HepG2 (cell line): ENCODE measurements at regions of chr9 and their contacts with region 1.

Region 1: GRCh38 chr9:125544988-125545651 is 161.9 kb downstream of the MAPKAP1 start:
- DNase-seq: no peak
- ATAC-seq: no peak
- H3K4me3 ChIP-seq: no peak overlapping the region
- H3K27ac ChIP-seq: no peak overlapping the region
- H3K4me1 ChIP-seq: peaks cover 37% of the 10 kb centered on the region
- H3K27me3 ChIP-seq: no peaks in the 10 kb centered on the region
- CTCF ChIP-seq: no peak
- EP300 ChIP-seq: no peak
- POLR2A ChIP-seq: no peak
- RAD21 ChIP-seq: no peak

Region 2: DNA sequence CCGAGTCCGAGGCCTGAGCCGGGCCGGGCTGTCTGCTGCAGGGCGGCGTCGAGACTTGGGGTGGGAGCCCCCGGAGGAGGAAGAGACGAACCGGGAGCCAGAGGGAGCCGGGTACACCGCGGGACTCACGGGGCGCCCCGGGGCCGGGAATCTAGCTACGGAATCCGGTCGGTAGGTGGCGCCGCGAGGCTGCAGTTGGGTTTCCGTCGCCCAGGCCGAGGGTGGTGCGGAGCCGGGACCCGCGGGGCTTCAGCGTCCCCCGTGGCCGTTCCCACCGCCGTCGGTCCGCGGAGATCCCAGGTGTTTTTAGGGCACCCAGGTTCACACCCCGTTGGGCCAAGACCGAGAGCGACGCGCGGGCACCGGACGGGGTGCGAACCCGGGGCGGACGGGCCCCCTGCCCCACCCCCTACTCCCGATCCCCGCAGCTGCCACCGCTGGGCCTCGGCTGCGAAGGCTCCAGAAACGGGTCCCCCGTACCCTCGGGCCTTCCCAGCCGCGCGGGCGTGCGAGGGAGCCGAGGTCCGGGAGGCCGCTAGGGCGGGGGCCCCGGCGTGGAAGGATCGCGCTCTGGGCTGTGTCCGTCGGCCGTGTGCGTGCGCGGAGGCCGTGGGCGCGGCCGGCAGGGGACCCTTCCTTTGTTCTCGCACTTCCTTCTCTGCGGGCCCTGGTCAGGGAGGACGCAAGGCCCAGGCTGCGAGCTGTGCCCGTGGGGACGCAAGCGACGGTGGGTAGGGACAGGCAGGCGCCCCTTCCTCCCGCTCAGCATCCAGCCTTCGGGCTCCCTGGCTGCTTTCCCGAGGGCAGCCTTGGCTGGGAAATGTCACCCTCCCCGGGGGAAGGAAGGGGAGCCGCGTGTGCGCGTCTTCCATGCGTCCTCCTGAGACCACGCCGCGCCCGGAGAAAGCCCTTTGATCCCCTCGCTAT is 136.9 kb before region 1 on chr9:
- CTCF ChIA-PET with region 1: no interaction called
- POLR2A ChIA-PET with region 1: no interaction called
- in situ Hi-C with region 1: no loop called
- intact Hi-C with region 1: loop called (anchors 5 kb)
- DNase-seq: peak; percentile 39
- ATAC-seq: peak; percentile 84
- H3K4me3 ChIP-seq: peak overlapping the region; percentile 72 to 78 (median 78)
- H3K27ac ChIP-seq: no peak overlapping the region
- H3K4me1 ChIP-seq: peaks cover 52% of the 10 kb centered on the region
- H3K27me3 ChIP-seq: peaks cover 0 to 34% of the 10 kb centered on the region in 2 experiments; a peak in 4 of 5 replicates
- CTCF ChIP-seq: peak; percentile 96
- EP300 ChIP-seq: no peak
- POLR2A ChIP-seq: no peak
- RAD21 ChIP-seq: peak; percentile 95

Region 3: GRCh38 chr9:125650271-125650737 is 105.2 kb after region 1 on chr9:
- CTCF ChIA-PET with region 1: no interaction called
- POLR2A ChIA-PET with region 1: no interaction called
- in situ Hi-C with region 1: no loop called
- intact Hi-C with region 1: no loop called
- DNase-seq: no peak
- ATAC-seq: no peak
- H3K4me3 ChIP-seq: no peak overlapping the region
- H3K27ac ChIP-seq: no peak overlapping the region
- H3K4me1 ChIP-seq: 0 out of 2 replicates have a peak, but pooled peaks cover 5% of the 10 kb centered on the region
- H3K27me3 ChIP-seq: no peaks in the 10 kb centered on the region
- CTCF ChIP-seq: no peak
- EP300 ChIP-seq: no peak
- POLR2A ChIP-seq: no peak
- RAD21 ChIP-seq: no peak